ENCODE measurements at regions of chr6 and their contacts with region 1.

Region 1: DNA sequence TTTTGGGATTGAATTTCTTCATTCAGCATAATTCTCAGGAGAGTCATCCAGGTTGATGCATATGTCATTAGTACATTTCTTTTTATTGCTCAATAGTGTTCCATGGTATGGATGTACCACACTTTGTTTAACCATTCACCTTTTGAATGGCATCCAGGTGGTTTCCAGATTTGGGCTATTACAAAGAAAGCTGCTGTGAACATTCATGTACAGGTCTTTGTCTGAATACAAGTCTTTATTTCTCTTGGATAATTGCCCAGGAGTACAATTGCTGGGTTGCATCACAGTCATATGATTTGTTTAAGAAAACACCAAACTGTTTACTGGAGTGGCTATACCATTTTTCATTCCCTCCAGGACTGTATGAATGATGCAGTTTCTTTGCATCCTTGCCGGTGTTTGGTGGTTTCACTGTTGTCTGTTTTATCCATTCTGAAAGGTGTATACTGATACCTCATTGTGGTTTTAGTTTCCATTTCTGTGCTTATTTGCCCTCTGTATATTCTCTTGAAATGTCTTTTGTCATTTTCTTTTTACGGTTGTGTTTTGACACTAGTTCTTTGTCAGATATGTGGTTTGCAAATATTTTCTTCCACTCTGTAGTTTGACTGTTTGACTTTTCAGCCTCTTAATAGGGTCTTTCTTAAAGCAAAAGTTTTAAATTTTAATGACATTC is 8.8 kb downstream of the CDKAL1 start:
- DNase-seq: peak; percentile 63
- H3K4me3 Mint-ChIP-seq: no peak overlapping the region
- H3K27ac Mint-ChIP-seq: peak overlapping the region; percentile 60
- H3K4me1 Mint-ChIP-seq: peaks cover 50% of the 10 kb centered on the region
- H3K27me3 Mint-ChIP-seq: no peaks in the 10 kb centered on the region

Region 2: GRCh38 chr6:20115246-20115980 is 427.7 kb before region 1 on chr6:
- CTCF ChIA-PET with region 1: no interaction called
- intact Hi-C with region 1: no loop called
- DNase-seq: no peak
- H3K4me3 Mint-ChIP-seq: no peak overlapping the region
- H3K27ac Mint-ChIP-seq: no peak overlapping the region
- H3K4me1 Mint-ChIP-seq: no peaks in the 10 kb centered on the region
- H3K27me3 Mint-ChIP-seq: no peaks in the 10 kb centered on the region

Region 3: DNA sequence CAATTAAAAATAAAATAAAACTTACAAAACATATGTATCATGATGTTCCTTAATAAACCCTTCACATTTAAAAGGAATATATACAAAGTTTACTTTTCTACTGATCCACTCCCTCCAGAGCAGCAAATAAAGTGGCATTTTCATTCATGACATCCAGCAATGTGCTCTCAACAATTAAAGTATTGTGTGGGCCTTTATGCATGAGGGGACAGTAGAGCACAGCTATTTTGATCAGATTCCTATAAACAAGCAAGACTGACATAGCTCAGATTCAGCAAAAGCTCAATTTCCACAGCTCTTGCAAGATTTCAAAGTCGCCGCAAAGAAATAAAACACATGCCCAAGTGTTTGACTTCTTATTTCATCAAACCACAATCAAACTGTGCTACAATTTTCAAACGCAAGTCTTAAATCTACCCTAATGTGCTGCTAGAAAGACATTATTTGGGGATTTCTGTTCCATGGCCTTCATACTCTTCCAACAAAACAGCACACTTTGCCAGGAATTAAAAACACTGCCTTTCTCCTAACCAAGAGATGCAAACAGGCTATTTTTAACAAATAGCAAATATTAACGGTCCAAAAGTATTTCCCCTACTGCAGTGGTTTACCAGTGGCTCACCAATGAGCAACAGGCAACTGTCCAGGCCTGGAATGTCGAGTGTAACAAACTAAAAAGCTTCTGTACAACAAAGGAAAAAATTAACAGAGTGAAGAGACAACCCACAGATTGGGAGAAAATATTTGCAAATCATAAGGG is 383.1 kb before region 1 on chr6:
- CTCF ChIA-PET with region 1: no interaction called
- intact Hi-C with region 1: no loop called
- DNase-seq: no peak
- H3K4me3 Mint-ChIP-seq: no peak overlapping the region
- H3K27ac Mint-ChIP-seq: no peak overlapping the region
- H3K4me1 Mint-ChIP-seq: no peaks in the 10 kb centered on the region
- H3K27me3 Mint-ChIP-seq: no peaks in the 10 kb centered on the region

Region 4: GRCh38 chr6:20582586-20583446 is 39.8 kb after region 1 on chr6:
- CTCF ChIA-PET with region 1: no interaction called
- intact Hi-C with region 1: loop called (anchors 1 kb)
- DNase-seq: no peak
- H3K4me3 Mint-ChIP-seq: no peak overlapping the region
- H3K27ac Mint-ChIP-seq: no peak overlapping the region
- H3K4me1 Mint-ChIP-seq: peaks cover 21% of the 10 kb centered on the region
- H3K27me3 Mint-ChIP-seq: no peaks in the 10 kb centered on the region

Region 5: DNA sequence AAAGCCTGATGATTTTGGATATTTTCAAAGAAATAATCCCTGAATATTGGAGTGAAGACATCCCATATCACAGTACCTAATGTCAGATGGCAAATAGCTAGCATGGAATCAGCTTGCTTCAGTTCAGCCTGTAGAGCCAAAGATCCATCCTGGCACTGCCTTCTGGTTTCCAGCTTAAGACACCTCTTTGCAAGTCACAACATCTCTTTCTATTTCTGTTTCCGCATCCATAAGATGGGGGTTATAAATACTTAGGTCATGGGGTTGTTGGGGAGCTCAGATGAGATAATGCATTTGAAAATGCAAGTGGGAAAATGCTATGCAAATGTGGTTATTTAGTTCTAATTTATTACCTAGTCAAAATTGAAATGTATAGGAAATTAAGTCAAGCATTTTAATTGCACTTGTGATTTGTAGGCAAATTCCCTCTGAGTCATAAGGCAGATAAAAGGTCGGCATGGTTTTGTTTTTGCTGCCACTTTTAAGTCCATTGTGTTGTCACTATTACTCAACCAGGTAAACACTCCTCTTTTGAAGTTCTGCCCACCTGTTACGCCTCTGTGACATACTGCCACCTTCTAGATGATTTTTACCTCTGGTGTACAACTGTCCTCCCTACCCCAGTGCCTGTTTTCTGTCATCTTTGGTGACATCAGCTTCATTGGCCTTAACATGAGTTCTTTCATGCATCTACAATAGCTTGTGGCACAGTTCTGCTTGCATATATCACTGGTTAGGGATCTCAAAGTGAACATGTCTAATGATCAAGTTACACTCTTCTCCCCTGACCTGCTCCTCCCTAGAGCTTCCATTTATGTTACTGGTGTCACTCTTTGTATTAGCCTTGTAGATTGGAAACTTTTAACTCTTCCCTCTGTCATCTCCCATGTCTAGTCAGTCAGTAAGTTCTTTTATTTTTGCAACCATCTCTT is 87.8 kb after region 1 on chr6:
- CTCF ChIA-PET with region 1: interaction called, 3 read pairs
- intact Hi-C with region 1: loop called (anchors 2 kb)
- DNase-seq: peak; percentile 46
- H3K4me3 Mint-ChIP-seq: no peak overlapping the region
- H3K27ac Mint-ChIP-seq: peak overlapping the region; percentile 17
- H3K4me1 Mint-ChIP-seq: peaks cover 42% of the 10 kb centered on the region
- H3K27me3 Mint-ChIP-seq: no peaks in the 10 kb centered on the region

Region 6: GRCh38 chr6:20919677-20920385 is 376.8 kb after region 1 on chr6:
- CTCF ChIA-PET with region 1: no interaction called
- intact Hi-C with region 1: loop called (anchors 1 kb)
- DNase-seq: peak; percentile 33
- H3K4me3 Mint-ChIP-seq: no peak overlapping the region
- H3K27ac Mint-ChIP-seq: peak overlapping the region; percentile 3
- H3K4me1 Mint-ChIP-seq: peaks cover 25% of the 10 kb centered on the region
- H3K27me3 Mint-ChIP-seq: no peaks in the 10 kb centered on the region